ENCODE measurements at regions of chr10 and their contacts with region 1.

Region 1: DNA sequence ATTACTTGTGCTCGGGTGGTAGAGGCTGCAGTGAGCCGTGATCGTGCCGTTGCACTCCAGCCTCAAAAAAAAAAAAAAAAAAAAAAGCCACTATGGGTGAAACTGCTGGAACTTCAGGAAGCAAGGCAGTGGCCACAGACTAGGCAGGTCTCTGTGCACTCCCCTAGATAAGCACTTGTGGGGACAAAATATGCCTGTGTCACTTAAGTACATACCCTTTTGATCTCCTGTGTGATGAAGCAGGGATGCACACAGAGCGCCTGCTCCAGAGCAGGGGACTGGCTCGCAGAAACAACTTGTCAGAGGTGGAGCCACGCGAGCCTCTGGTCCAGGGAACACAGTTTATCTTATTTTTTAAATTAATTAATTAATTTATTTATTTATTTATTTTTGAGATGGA is 42.9 kb upstream of the PSAP start:
- DNase-seq: no peak
- H3K4me3 Mint-ChIP-seq: no peak overlapping the region
- H3K27ac Mint-ChIP-seq: no peak overlapping the region
- H3K4me1 Mint-ChIP-seq: peaks cover 18% of the 10 kb centered on the region
- H3K27me3 Mint-ChIP-seq: no peaks in the 10 kb centered on the region

Region 2: DNA sequence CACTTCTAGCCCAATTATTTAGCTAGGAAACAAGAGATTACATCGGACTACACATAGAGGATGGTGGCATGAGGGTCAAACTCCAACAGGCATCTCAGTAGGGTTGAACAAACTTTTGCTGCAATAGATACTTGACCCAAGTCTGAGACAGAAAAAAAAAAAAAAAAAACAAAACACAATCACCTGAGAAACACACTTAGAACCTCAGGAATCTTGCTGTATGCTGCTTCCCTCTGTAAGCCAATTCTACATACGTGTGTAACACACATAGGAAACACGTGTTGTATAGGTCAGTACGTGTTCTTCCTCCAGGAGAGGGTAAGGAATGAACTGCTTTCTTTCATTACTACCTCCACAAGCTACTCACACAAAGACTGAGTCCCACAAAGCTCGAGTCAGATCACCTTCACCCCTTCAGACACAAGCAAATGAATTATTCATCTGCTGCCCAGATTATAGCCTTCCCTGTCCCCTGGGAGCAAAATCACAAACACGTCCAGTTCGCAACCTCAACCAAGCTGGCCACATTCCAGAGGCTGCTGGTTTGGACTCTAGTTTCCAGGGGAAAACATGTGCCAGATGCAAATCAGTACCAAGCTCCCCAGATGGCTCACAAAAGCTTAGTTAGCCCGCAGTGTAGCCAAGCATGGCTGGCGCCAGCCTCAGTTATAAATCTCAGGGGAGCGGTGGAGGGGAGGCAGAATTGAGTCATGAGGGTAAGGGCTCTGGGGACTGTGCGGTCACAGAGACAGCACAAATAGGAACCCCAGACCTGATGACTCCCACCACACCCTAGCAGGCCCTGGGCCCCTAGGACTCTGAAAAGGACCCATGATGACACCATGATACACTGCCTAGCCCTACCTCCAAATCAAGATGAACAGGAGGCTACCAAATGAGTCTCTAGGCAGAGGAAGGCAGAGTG is 58.0 kb before region 1 on chr10:
- CTCF ChIA-PET with region 1: interaction called, 38 read pairs
- intact Hi-C with region 1: loop called (anchors 1 kb)
- DNase-seq: no peak
- H3K4me3 Mint-ChIP-seq: no peak overlapping the region
- H3K27ac Mint-ChIP-seq: no peak overlapping the region
- H3K4me1 Mint-ChIP-seq: peaks cover 47% of the 10 kb centered on the region
- H3K27me3 Mint-ChIP-seq: no peaks in the 10 kb centered on the region

Region 3: DNA sequence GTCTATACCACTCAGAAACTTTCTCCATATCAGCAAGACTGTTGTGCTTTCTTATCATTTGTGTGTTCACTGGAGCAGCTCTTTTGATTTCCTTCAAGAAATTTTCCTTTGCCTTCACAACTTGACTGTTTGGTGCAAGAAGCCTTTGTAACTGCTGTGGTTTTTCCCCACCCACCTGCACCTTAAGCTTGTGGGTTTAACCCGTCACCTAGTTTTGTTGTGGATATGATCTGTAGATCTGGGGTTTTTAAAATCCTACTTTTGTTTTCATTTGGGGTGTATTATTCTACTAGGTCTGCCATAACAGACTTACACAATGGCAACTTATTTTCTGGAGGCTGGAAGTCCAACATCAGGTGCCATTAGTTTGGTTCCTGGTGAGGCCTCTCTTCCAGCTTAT is 39.7 kb after region 1 on chr10:
- CTCF ChIA-PET with region 1: interaction called, 19 read pairs
- intact Hi-C with region 1: no loop called
- DNase-seq: peak; percentile 87
- H3K4me3 Mint-ChIP-seq: no peak overlapping the region
- H3K27ac Mint-ChIP-seq: peak overlapping the region; percentile 69
- H3K4me1 Mint-ChIP-seq: peaks cover 36% of the 10 kb centered on the region
- H3K27me3 Mint-ChIP-seq: no peaks in the 10 kb centered on the region

Region 4: DNA sequence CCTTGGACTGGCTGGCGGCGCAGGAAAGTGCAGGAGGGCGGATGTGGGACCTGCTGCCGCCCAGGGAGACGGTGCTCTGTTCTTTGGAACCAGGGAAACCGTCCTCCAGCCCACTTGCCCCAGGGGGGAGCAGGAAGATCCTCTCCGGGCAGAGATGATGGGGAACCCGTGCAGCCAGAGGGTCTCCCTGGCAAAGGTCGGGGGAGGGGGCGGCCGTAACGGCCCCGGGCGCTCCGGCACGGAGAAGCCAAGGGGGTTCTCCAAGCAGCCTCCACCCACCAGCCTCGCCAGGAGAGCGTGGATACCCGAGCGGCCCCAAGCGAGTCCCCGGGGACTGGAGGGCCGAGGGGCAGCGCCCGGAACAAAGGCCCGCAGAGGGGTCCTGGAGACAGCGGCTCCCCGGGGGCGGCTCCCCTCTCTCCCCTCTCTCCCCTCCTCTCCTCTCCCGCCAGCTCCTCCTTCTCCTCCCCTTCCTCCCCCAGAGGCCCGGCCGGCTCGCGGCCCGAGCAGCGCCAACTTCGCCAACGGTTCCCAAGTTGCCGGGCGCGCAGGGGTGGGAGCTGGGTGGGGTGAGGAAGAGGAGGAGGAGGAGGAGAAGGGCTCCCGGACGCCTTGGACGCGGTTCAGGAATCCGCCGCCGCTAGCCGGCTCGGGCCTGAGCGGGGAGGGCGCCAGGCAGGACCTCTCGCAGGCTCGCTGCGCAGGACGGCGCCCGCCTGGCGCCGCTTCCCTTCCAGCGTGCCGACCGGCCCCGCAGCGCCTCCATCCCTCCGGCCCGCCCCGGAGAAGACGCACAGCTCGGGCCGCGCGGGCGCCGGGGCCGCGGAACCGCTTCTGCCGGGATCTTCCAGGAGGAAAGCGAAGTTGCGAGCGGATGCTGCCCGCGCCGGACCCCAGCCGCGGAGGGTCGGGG is 70.1 kb after region 1 on chr10 and contains the start of gene CHST3:
- CTCF ChIA-PET with region 1: interaction called, 14 read pairs
- intact Hi-C with region 1: no loop called
- DNase-seq: peak; percentile 19
- H3K4me3 Mint-ChIP-seq: peak within 1 kb of the TSS; percentile 80
- H3K27ac Mint-ChIP-seq: peak within 1 kb of the TSS; percentile 58
- H3K4me1 Mint-ChIP-seq: peaks cover 14% of the 10 kb centered on the region
- H3K27me3 Mint-ChIP-seq: peaks cover 26% of the 10 kb centered on the region
- total RNA-seq, gene CHST3: 0.55 to 0.57 TPM

Region 5: GRCh38 chr10:71985542-71986250 is 91.8 kb after region 1 on chr10:
- CTCF ChIA-PET with region 1: interaction called, 11 read pairs
- intact Hi-C with region 1: no loop called
- DNase-seq: peak; percentile 33
- H3K4me3 Mint-ChIP-seq: peak overlapping the region; percentile 3
- H3K27ac Mint-ChIP-seq: peak overlapping the region; percentile 73
- H3K4me1 Mint-ChIP-seq: peaks cover 22% of the 10 kb centered on the region
- H3K27me3 Mint-ChIP-seq: no peaks in the 10 kb centered on the region

Region 6: DNA sequence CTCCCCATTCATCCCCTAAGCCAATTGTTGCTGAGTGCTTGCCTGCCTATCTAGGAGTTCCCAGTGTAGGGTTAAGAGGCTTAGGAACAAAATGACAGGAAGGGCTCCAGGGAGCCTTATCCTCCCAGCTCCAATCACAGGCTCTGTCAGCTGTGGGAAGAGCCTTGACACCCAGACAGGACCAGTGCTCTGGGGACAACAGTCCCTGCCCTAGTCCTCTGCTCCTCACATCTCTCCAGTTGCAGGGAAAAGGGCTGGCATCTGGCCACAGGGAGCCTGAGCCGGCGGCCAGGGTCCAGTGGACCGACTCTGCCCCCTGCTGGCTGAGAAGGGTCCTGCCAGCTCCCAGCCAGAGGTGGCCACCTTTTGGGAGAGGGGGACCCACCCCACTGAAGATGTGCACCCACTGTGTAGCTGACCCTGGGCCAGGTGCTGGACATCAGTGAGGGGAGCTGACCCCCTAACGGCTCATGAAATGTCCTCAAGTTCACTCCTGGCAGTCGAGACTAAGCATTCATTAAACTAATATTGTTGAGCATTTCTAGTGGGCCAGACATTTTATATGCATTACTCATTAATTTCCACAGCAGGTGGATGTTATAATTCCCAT is 443.2 kb after region 1 on chr10:
- CTCF ChIA-PET with region 1: interaction called, 9 read pairs
- intact Hi-C with region 1: loop called (anchors 1 kb)
- DNase-seq: peak; percentile 79
- H3K4me3 Mint-ChIP-seq: no peak overlapping the region
- H3K27ac Mint-ChIP-seq: peak overlapping the region; percentile 100
- H3K4me1 Mint-ChIP-seq: peaks cover 52% of the 10 kb centered on the region
- H3K27me3 Mint-ChIP-seq: no peaks in the 10 kb centered on the region